ENCODE measurements at regions of chr2 and their contacts with region 1.

Region 1: GRCh38 chr2:24827321-24828237 is 34.4 kb downstream of the CENPO start:
- DNase-seq: peak; percentile 94
- H3K4me3 ChIP-seq: no peak overlapping the region
- H3K27ac ChIP-seq: no peak overlapping the region
- H3K4me1 ChIP-seq: peaks cover 5% of the 10 kb centered on the region
- H3K27me3 ChIP-seq: no peaks in the 10 kb centered on the region
- CTCF ChIP-seq: peak; percentile 72 to 91 (median 80)
- POLR2A ChIP-seq: no peak

Region 2: DNA sequence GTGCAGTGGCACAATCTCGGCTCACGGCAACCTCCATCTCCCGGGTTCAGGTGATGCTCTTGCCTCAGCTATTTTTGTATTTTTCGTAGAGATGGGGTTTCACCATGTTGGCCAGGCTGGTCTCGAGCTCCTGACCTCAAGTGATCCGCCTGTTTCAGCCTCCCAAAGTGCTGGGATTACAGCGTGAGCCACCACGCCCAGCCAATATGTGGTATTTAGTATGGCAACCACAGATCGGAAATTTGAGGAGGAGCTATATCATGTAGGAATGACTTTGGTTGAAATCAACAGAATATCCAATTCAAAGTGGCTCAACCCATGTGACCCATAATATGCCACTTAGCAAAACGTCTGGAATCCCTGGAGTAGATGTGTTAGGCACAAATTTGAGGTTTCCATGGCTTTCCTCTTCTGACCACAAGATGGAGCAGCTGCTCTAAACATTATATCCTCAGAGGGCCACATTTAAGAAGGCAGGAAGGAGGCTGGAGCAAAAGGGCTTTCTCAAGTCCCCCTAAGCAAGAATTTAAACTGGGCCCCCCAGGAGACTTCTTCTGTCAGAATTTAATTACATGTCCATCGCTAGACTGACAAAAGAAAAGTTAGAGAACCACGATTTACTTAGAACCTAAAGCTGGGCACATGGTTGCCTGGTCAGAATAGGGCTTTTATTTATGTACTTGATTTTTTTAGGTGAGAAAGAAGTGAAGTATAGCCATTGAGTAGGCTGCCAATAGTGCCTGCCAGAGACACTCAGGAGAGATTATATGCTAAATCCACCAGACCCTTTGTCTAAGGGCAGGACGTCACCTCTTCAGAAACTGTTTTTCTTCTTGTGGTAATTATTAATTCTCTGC is 417.7 kb before region 1 on chr2:
- intact Hi-C with region 1: loop called (anchors 5 kb)
- DNase-seq: peak; percentile 58
- H3K4me3 ChIP-seq: no peak overlapping the region
- H3K27ac ChIP-seq: no peak overlapping the region
- H3K4me1 ChIP-seq: no peaks in the 10 kb centered on the region
- H3K27me3 ChIP-seq: no peaks in the 10 kb centered on the region
- CTCF ChIP-seq: peak; percentile 67 to 84 (median 80)
- POLR2A ChIP-seq: no peak

Region 3: DNA sequence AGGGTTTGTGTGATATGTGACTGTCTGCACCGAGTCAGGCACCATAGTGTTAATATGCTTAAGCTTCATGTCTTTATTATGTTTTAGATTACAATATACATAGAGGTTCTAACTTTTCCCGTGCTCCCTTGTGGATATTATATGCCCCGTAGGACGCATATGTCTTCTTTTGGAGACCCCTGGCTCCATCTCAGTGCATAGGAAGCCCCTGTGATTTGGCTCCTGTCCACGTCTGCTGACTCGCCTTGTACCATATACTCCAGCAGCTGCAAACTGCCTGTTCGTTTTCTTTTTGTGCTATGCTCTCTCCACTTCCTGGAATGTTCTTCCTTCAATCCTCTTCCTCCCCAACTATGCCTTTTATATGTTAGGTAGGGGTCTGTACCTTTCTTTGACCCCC is 145.3 kb before region 1 on chr2:
- intact Hi-C with region 1: no loop called
- DNase-seq: no peak
- H3K4me3 ChIP-seq: no peak overlapping the region
- H3K27ac ChIP-seq: no peak overlapping the region
- H3K4me1 ChIP-seq: no peaks in the 10 kb centered on the region
- H3K27me3 ChIP-seq: no peaks in the 10 kb centered on the region
- CTCF ChIP-seq: no peak
- POLR2A ChIP-seq: no peak

Region 4: GRCh38 chr2:24907116-24907515 is 79.5 kb after region 1 on chr2:
- intact Hi-C with region 1: no loop called
- DNase-seq: no peak
- H3K4me3 ChIP-seq: no peak overlapping the region
- H3K27ac ChIP-seq: no peak overlapping the region
- H3K4me1 ChIP-seq: no peaks in the 10 kb centered on the region
- H3K27me3 ChIP-seq: no peaks in the 10 kb centered on the region
- CTCF ChIP-seq: no peak
- POLR2A ChIP-seq: no peak

Region 5: GRCh38 chr2:24959761-24960160 is 132.2 kb after region 1 on chr2:
- intact Hi-C with region 1: no loop called
- DNase-seq: no peak
- H3K4me3 ChIP-seq: no peak overlapping the region
- H3K27ac ChIP-seq: no peak overlapping the region
- H3K4me1 ChIP-seq: no peaks in the 10 kb centered on the region
- H3K27me3 ChIP-seq: no peaks in the 10 kb centered on the region
- CTCF ChIP-seq: no peak
- POLR2A ChIP-seq: no peak